ENCODE measurements at regions of chr2 and their contacts with region 1.

Region 1: GRCh38 chr2:241877989-241878970 is 8.8 kb downstream of the RTP5 start:
- DNase-seq: peak in 1 of 2 experiments; percentile 88
- H3K4me3 ChIP-seq: no peak overlapping the region
- H3K27ac ChIP-seq: no peak overlapping the region
- H3K4me1 ChIP-seq: peaks cover 5% of the 10 kb centered on the region
- H3K27me3 ChIP-seq: no peaks in the 10 kb centered on the region
- CTCF ChIP-seq: peak; percentile 79

Region 2: DNA sequence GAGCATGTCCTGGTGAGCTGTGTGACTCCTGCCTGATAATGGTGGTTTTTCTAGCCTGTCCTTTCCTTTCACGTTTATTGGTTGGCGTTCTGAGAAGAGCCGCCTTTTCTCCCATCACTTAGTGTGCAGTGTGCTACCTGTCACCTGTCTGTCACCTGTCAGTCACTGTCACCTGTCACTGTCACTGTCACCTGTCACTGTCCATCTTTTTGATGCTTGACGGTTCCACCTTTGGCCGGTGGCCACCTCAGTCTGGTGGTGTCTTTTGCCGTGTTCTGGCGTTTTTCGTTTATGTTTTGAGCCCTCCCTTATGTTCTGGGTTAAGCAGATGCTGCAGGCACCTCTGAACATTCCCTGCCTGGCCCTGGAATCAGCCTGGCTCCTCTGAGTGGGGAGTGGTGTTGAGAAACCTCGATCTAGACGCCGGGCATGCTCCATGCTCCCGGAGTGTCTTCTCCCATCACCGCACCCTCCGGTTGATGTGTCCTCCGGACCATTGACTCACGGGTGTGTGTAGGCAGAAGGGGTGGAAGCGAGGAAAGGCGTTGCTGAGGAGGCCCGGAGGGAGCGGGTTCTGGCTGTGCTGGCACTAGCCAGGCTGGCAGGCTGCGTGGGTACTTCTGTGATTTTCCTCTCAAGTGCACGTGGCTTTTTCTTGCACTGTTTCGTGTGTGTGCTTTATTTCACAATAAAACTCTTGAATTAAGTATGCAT is 212.4 kb before region 1 on chr2:
- CTCF ChIA-PET with region 1: interaction called, 3 read pairs
- POLR2A ChIA-PET with region 1: no interaction called
- intact Hi-C with region 1: loop called (anchors 1 kb)
- DNase-seq: no peak
- H3K4me3 ChIP-seq: no peak overlapping the region
- H3K27ac ChIP-seq: no peak overlapping the region
- H3K4me1 ChIP-seq: no peaks in the 10 kb centered on the region
- H3K27me3 ChIP-seq: no peaks in the 10 kb centered on the region
- CTCF ChIP-seq: no peak

Region 3: GRCh38 chr2:241686649-241687425 is 191.4 kb before region 1 on chr2 and contains the start of gene DTYMK:
- CTCF ChIA-PET with region 1: interaction called, 10 read pairs
- POLR2A ChIA-PET with region 1: no interaction called
- intact Hi-C with region 1: loop called (anchors 1 kb)
- DNase-seq: peak; percentile 93 to 100
- H3K4me3 ChIP-seq: peak within 1 kb of the TSS; percentile 95
- H3K27ac ChIP-seq: peak within 1 kb of the TSS; percentile 72
- H3K4me1 ChIP-seq: peaks cover 13% of the 10 kb centered on the region
- H3K27me3 ChIP-seq: no peaks in the 10 kb centered on the region
- CTCF ChIP-seq: no peak
- total RNA-seq, gene DTYMK: 183 and 191 TPM in 2 replicates

Region 4: GRCh38 chr2:241734467-241735208 is 143.6 kb before region 1 on chr2 and contains the start of gene D2HGDH:
- CTCF ChIA-PET with region 1: no interaction called
- POLR2A ChIA-PET with region 1: no interaction called
- intact Hi-C with region 1: loop called (anchors 10 kb)
- DNase-seq: peak; percentile 65 to 98
- H3K4me3 ChIP-seq: peak within 1 kb of the TSS; percentile 85
- H3K27ac ChIP-seq: peak within 1 kb of the TSS; percentile 36
- H3K4me1 ChIP-seq: peaks cover 16% of the 10 kb centered on the region
- H3K27me3 ChIP-seq: no peaks in the 10 kb centered on the region
- CTCF ChIP-seq: no peak
- total RNA-seq, gene D2HGDH: 131 and 232 TPM in 2 replicates

Measured in PC-9 (cell line).